ENCODE measurements at regions of chr6 and their contacts with region 1.

Region 1: DNA sequence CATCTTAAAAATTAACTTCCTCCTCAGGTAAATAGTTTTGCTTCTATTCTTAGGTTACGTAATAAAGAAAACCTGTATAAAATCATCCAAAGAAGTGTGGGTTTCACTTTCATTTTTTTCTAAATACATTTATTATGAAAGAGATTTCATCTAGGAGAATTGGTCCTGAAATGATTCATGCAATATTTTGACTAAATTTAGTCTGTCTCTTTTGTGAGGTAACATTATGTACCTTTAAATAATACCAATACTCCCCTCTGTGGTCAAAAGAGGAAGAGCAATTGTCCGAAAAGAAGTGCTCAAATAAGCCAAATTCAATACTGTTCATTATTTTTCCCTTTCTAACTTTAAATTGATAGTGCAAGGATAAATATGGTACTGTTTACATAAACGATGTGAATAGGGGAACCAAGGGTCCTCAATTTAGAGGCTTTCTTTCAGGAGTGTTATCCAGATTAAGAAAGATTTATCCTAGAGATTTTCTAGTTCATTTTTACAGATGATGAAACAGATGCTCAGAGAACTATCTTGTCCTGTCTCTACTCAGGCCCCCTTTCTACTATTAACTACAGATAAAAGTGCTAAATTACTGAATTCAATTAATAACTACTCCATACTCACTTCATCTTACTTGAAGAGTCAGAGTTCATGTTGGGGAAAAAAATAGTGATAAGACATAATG is 26.2 kb downstream of the CYP39A1 start:
- DNase-seq: no peak
- ATAC-seq: no peak
- H3K4me3 Mint-ChIP-seq: no peak overlapping the region
- H3K27ac Mint-ChIP-seq: no peak overlapping the region
- H3K4me1 Mint-ChIP-seq: no peaks in the 10 kb centered on the region
- H3K27me3 Mint-ChIP-seq: peaks cover 15% of the 10 kb centered on the region
- CTCF ChIP-seq: peak; percentile 48

Region 2: GRCh38 chr6:46419576-46420002 is 206.8 kb before region 1 on chr6:
- CTCF ChIA-PET with region 1: no interaction called
- POLR2A ChIA-PET with region 1: no interaction called
- intact Hi-C with region 1: loop called (anchors 5 kb)
- DNase-seq: peak; percentile 60
- ATAC-seq: no peak
- H3K4me3 Mint-ChIP-seq: no peak overlapping the region
- H3K27ac Mint-ChIP-seq: no peak overlapping the region
- H3K4me1 Mint-ChIP-seq: no peaks in the 10 kb centered on the region
- H3K27me3 Mint-ChIP-seq: peaks cover 22% of the 10 kb centered on the region
- CTCF ChIP-seq: peak; percentile 66

Measured in activated CD8-positive, alpha-beta T cell treated with anti-CD3 and anti-CD28 coated beads for 36 hours (primary cell).